HEK293 (cell line): ENCODE measurements at regions of chr6 and their contacts with region 1.

Region 1: GRCh38 chr6:52020945-52021570 is 66.4 kb downstream of the PKHD1 start:
- H3K4me3 ChIP-seq: no peak overlapping the region
- H3K27ac ChIP-seq: no peak overlapping the region
- H3K4me1 ChIP-seq: 0 out of 2 replicates have a peak, but pooled peaks cover 2% of the 10 kb centered on the region
- CTCF ChIP-seq: no peak

Region 2: DNA sequence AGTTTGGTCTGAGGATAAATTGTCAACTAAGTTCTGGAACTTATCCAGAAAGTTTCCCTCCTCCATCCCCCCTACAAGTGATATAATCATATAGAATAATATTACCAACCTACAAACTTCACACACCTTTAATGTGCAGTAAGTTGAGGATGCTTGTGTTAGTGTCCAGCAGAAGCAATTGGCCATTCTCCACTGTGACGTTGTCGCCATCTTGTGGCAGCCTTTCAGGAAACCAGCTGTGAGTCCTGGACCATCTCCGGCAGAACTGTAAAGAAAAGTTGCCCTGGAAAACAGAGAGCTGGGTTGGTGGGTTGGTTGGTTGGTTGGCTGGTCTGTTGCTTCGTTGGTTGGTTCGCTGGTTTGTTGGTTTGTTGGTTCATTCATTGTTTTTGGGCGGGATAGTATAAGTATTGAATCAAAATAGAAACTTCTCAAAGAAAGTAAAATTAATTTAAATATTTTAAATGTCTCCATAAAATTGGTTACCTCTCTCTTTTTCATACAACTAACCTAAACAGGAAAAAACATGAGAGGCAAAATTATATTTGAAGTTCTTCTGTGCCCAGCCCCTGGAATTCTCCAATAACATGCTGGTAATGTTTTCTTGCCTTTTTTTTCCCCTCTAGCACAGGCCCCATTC is 61.2 kb before region 1 on chr6:
- CTCF ChIA-PET with region 1: interaction called, 10 read pairs
- POLR2A ChIA-PET with region 1: no interaction called
- H3K4me3 ChIP-seq: no peak overlapping the region
- H3K27ac ChIP-seq: no peak overlapping the region
- H3K4me1 ChIP-seq: no peaks in the 10 kb centered on the region
- CTCF ChIP-seq: peak; percentile 45

Region 3: DNA sequence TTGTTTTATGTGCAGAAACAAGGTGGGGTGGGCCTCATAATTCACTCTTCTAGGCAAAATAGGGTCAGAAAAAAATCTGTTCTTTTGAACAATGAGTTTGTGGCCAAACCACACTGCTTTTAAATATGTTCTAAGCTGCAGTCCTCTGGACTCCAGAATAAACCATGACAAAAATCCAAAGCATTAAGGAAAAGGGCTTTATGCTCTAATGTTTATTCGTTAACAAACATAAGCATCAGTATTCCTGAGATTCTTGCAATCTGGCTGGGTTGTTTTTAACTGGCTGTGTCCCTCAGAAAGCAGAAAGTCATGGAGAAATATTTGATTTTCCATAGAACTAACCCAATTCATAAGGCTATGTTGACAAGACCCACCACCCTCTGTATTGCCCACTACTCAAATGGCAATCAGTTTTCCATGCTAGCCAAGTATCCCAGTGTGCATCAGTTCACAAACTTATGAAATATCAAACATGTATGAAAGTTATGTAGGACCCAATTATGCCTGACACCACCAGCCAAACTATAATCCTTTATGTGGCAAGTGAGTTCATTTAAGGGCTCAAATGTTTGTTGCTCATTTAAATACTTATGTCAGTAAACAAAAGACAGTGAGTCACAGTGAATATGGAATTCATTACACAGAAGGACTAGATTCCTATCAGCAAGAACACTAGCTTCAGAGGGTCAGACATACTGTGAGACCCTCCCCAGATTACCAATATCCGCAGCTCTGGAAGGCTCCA is 21.3 kb after region 1 on chr6:
- CTCF ChIA-PET with region 1: interaction called, 12 read pairs
- POLR2A ChIA-PET with region 1: no interaction called
- H3K4me3 ChIP-seq: no peak overlapping the region
- H3K27ac ChIP-seq: no peak overlapping the region
- H3K4me1 ChIP-seq: no peaks in the 10 kb centered on the region
- CTCF ChIP-seq: no peak

Region 4: DNA sequence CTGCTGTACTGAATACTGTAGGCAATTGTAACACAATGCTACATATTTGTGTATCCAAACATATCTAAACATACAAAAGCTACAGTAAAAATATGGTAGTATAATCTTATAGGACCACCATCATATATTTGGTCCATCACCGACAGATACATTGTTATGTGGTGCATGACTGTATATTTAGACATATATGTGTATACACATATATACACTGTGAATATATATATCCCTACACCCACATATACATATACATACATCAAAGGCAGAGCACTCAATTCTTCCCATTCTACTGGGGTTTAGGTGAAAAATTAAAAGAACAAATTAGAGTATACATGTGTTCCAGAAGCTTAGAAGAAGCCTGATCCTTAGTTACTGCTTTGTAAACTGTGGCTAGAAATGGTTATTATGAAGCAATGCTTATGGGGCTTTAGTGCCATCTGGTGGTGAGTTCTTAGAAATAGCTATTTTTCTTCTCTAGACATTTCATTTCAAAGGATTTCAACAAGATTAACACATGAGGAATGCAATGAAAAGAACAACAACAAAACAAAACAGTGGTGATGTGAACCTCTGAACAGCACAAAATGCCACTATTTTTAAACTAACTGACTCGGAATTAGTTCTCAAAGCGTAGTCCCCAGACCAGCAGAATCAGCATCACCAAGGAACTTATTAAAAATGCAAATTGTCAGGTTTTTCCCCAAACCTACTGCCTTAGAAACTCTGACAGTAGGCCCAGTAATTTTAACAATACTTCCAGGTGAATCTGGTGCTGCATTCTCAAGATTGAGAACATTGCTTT is 28.4 kb after region 1 on chr6:
- CTCF ChIA-PET with region 1: interaction called, 20 read pairs
- POLR2A ChIA-PET with region 1: no interaction called
- H3K4me3 ChIP-seq: no peak overlapping the region
- H3K27ac ChIP-seq: no peak overlapping the region
- H3K4me1 ChIP-seq: 0 out of 2 replicates have a peak, but pooled peaks cover 2% of the 10 kb centered on the region
- CTCF ChIP-seq: peak; percentile 24; the same call in 1 of the 2 replicates